T-cell (primary cell): ENCODE measurements at regions of chr3 and their contacts with region 1.

Region 1: DNA sequence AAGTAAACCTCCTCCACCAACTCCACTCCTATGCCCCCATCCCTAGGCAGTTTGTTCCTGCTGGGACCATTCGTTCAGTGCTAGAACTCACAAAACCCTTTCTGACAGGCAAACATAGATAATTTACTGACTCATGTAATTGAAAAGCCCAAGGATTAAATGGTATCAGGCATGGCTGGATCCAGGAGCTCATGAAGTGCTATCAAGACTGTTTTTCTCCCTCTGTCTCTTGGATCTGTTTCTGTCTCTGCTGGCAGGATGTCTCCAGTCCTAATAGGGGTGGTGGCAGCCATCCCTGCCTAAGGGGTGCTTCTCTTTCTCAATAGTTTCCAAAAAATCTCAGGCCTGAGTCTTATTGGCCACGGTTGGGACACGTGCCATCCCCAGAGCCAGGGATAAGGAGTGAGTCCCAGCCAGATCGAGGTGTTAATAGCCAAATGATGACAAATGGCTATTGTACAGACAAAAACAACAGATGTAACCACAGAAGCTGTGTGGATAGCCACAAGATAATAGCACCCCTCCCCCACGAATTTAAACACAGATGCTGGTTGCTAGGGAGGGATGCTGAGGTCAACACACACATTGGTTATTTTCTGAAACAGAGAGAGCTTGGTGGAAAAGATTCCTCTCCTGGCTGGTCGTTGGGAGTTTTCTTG is 168.6 kb downstream of the SHQ1 start:
- DNase-seq: no peak
- ATAC-seq: no peak
- H3K4me3 ChIP-seq: no peak overlapping the region
- H3K4me3 Mint-ChIP-seq: no peak overlapping the region
- H3K27ac ChIP-seq: no peak overlapping the region
- H3K27ac Mint-ChIP-seq: no peak overlapping the region
- H3K4me1 ChIP-seq: no peaks in the 10 kb centered on the region
- H3K4me1 Mint-ChIP-seq: peaks cover 0 to 4% (median 2%) of the 10 kb centered on the region in 3 donors
- H3K27me3 ChIP-seq: peaks cover 0 to 2% of the 10 kb centered on the region in 2 experiments
- H3K27me3 Mint-ChIP-seq: no peaks in the 10 kb centered on the region

Region 2: GRCh38 chr3:72549761-72550581 is 129.7 kb before region 1 on chr3:
- CTCF ChIA-PET with region 1: interaction called in 1 of 2 experiments, 12 read pairs
- POLR2A ChIA-PET with region 1: no interaction called
- DNase-seq: peak in 9 of 35 experiments; percentile 2 to 21 (median 6)
- ATAC-seq: peak; percentile 46 to 65 (median 63)
- H3K4me3 ChIP-seq: peak overlapping the region; percentile 19 to 21
- H3K4me3 Mint-ChIP-seq: peak overlapping the region; percentile 70 to 82 (median 78)
- H3K27ac ChIP-seq: peak overlapping the region; percentile 28
- H3K27ac Mint-ChIP-seq: peak overlapping the region; percentile 71 to 88
- H3K4me1 ChIP-seq: peaks cover 0 to 10% of the 10 kb centered on the region in 2 experiments
- H3K4me1 Mint-ChIP-seq: peaks cover 16 to 31% (median 17%) of the 10 kb centered on the region in 3 donors
- H3K27me3 ChIP-seq: no peaks in the 10 kb centered on the region
- H3K27me3 Mint-ChIP-seq: no peaks in the 10 kb centered on the region

Region 3: GRCh38 chr3:72810063-72810462 is 130.4 kb after region 1 on chr3:
- CTCF ChIA-PET with region 1: interaction called in 1 of 2 experiments, 10 read pairs
- POLR2A ChIA-PET with region 1: no interaction called
- DNase-seq: no peak
- ATAC-seq: no peak
- H3K4me3 ChIP-seq: no peak overlapping the region
- H3K4me3 Mint-ChIP-seq: no peak overlapping the region
- H3K27ac ChIP-seq: no peak overlapping the region
- H3K27ac Mint-ChIP-seq: no peak overlapping the region
- H3K4me1 ChIP-seq: peaks cover 0 to 2% of the 10 kb centered on the region in 2 experiments
- H3K4me1 Mint-ChIP-seq: peaks cover 0 to 5% (median 3%) of the 10 kb centered on the region in 3 donors
- H3K27me3 ChIP-seq: no peaks in the 10 kb centered on the region
- H3K27me3 Mint-ChIP-seq: no peaks in the 10 kb centered on the region

Region 4: DNA sequence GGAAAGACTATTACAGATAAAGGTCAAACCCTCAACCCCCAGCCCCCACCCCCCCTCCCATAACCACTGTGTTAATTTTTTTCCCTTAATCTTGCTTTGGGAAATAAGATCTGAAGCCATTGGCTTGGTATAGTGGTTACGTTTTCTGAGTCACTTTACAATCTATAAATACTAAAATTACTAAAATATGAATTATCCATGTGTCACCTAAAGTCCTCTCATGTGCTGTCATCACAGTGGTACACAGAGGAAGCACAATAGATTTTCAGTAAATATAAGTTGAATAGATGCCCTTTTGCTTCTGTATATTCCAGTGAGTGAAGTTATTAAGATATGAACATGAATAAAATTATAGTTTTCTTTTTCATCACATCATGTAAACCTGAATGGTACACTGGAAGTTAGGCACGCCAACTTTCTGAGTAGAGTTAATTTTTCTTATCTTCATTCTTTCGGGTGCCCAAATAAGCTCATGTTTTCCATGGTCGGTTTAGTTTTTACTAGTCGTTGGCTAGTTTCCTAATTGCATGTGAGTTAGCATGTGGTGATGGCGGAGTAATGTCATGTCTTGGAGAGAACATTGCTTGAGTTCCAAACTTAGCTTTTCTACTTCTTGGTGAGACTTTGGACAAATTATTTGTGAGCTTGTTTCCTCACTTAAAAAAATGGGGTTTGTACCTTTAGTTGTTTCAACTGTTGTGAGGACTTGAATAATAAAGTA is 328.5 kb after region 1 on chr3:
- CTCF ChIA-PET with region 1: no interaction called
- POLR2A ChIA-PET with region 1: no interaction called
- DNase-seq: no peak
- ATAC-seq: no peak
- H3K4me3 ChIP-seq: no peak overlapping the region
- H3K4me3 Mint-ChIP-seq: peak overlapping the region in 2 of 3 donors; percentile 9 to 51
- H3K27ac ChIP-seq: no peak overlapping the region
- H3K27ac Mint-ChIP-seq: peak overlapping the region in 1 of 2 donors; percentile 30
- H3K4me1 ChIP-seq: peaks cover 15 to 27% of the 10 kb centered on the region in 2 experiments
- H3K4me1 Mint-ChIP-seq: peaks cover 88 to 93% (median 92%) of the 10 kb centered on the region in 3 donors
- H3K27me3 ChIP-seq: no peaks in the 10 kb centered on the region
- H3K27me3 Mint-ChIP-seq: no peaks in the 10 kb centered on the region